Activated naive CD4-positive, alpha-beta T cell treated with anti-CD3 and anti-CD28 coated beads for 36 hours (primary cell): ENCODE measurements at regions of chr19 and their contacts with region 1.

Region 1: GRCh38 chr19:12202250-12202649 is 39.4 kb downstream of the ZNF136 start:
- DNase-seq: peak; percentile 84
- H3K4me3 Mint-ChIP-seq: no peak overlapping the region
- H3K27ac Mint-ChIP-seq: no peak overlapping the region
- H3K4me1 Mint-ChIP-seq: peaks cover 22% of the 10 kb centered on the region
- H3K27me3 Mint-ChIP-seq: no peaks in the 10 kb centered on the region

Region 2: GRCh38 chr19:12112701-12113100 is 89.5 kb before region 1 on chr19:
- CTCF ChIA-PET with region 1: no interaction called
- intact Hi-C with region 1: no loop called
- DNase-seq: peak; percentile 37
- H3K4me3 Mint-ChIP-seq: no peak overlapping the region
- H3K27ac Mint-ChIP-seq: no peak overlapping the region
- H3K4me1 Mint-ChIP-seq: peaks cover 15% of the 10 kb centered on the region
- H3K27me3 Mint-ChIP-seq: no peaks in the 10 kb centered on the region

Region 3: DNA sequence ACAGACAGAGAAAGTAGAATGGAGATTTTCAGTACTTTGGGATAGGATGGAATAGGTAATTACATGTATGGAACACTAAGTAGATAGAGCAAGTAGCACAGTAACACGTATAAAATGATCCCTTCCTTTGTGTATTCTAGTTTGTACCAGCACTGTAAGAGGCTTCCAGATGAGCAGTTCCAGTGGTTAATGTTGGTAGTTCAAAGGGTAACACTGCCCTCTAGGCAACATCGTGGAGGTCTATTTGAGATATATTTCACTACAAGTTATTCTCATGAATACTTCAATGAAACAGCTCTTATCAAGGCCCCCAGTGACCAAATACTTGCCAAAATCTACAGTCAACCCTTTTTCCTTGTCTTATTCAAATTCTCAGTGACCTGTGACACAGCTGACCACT is 144.6 kb after region 1 on chr19:
- CTCF ChIA-PET with region 1: no interaction called
- intact Hi-C with region 1: loop called (anchors 1 kb)
- DNase-seq: peak; percentile 28
- H3K4me3 Mint-ChIP-seq: no peak overlapping the region
- H3K27ac Mint-ChIP-seq: no peak overlapping the region
- H3K4me1 Mint-ChIP-seq: no peaks in the 10 kb centered on the region
- H3K27me3 Mint-ChIP-seq: no peaks in the 10 kb centered on the region

Region 4: DNA sequence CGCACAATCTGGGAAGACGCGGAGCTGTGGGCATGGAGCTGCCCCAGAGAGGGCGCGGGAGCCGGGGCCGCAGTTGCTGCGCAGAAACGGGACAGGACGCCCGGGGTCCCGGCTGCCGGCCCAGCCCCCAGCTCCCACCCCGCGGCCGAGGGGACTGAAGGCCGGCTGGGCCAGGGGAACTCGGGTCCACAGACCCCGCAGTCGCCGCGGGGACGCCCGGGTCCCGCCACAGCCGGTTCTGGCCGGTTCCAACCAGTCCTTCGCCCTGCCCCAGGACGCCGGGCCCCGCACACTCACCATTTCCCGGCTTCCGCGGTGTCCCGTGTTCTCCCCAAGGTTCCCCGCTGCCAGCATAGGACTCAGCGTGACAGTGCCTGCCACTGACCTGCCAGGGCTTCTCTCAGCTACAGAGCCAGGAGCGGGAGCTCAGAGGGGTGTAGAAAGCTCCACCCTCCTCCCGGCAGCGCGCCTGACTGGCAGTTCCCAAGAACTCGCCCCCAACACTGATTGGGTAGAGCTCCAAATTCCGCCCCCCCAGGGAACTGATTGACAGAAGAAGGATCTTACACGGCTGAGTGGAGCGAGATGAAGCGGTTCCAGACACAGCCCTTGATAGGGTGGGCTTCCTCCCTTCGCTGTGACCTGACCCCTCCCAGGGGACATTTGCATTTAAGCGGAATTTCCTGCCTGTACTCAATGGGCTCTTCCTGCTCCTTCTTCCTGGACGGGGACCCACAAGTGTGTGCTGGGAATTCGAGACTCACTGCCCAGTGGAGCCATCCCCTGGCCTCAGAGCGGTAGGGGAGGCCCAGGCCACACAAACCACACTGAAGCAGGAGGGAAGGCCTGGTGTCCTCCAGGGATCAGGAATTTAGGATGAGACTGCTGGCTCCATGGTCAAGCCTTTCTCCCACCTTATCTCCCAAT is 163.2 kb after region 1 on chr19 and contains the start of gene ZNF442:
- CTCF ChIA-PET with region 1: interaction called, 3 read pairs
- intact Hi-C with region 1: loop called (anchors 1 kb)
- DNase-seq: peak; percentile 96
- H3K4me3 Mint-ChIP-seq: peak within 1 kb of the TSS; percentile 85
- H3K27ac Mint-ChIP-seq: peak within 1 kb of the TSS; percentile 41
- H3K4me1 Mint-ChIP-seq: peaks cover 18% of the 10 kb centered on the region
- H3K27me3 Mint-ChIP-seq: no peaks in the 10 kb centered on the region
- total RNA-seq, gene ZNF442: 1.7 to 2.4 TPM